ENCODE measurements at regions of chr12 and their contacts with region 1.

Region 1: DNA sequence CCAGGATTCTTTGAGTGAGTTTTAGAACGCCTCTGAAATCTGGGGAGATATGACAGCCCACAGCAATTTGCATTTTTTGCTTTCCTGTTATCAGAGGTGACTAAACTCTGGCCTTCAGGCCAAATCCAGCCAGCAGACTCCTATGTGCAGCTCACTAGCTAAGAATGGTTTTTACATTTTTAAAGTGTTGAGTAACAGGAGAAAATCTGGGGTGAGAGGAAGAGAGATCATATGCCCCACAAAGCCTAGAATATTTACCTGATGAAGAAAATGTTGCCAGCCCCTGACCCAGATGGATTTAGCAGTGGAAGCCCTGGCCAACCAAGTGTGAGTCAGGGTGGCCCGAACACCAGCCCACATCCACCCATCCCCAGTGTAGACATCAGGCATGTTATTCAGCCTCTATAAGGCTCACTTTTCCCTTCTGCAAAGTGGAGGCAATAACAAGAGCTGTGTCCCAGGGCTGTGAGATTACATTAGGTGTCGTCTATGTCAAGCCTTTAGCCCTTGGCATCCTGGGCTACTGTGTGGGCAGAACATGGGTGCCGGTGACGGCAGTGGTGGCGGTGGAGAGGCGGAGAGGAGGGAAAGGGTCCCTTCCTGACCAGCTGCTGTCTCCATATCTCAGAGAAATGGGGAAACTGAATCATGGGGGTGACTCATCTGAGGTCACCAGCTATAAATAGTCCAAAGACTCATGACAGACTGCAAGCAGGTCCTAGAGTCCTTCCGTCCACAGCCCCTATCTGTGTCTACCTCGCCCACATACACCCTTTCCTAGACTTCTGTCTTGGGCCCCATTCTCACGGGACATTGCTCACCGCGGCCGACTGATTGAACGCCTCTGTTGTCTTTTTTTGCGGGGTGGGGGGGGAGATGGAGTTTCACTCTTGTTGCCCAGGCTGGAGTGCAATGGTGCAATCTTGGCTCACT is 32.6 kb upstream of the CD9 start:
- DNase-seq: peak in 6 of 14 experiments; percentile 11 to 79 (median 39)
- ATAC-seq: peak; percentile 45
- H3K4me3 ChIP-seq: no peak overlapping the region
- H3K4me3 Mint-ChIP-seq: peak overlapping the region; percentile 70
- H3K27ac ChIP-seq: peak overlapping the region in 1 of 2 donors; percentile 29
- H3K27ac Mint-ChIP-seq: peak overlapping the region; percentile 45
- H3K4me1 ChIP-seq: peaks cover 31% of the 10 kb centered on the region
- H3K4me1 Mint-ChIP-seq: peaks cover 27% of the 10 kb centered on the region
- H3K27me3 ChIP-seq: no peaks in the 10 kb centered on the region
- H3K27me3 Mint-ChIP-seq: no peaks in the 10 kb centered on the region
- CTCF ChIP-seq: no peak

Region 2: DNA sequence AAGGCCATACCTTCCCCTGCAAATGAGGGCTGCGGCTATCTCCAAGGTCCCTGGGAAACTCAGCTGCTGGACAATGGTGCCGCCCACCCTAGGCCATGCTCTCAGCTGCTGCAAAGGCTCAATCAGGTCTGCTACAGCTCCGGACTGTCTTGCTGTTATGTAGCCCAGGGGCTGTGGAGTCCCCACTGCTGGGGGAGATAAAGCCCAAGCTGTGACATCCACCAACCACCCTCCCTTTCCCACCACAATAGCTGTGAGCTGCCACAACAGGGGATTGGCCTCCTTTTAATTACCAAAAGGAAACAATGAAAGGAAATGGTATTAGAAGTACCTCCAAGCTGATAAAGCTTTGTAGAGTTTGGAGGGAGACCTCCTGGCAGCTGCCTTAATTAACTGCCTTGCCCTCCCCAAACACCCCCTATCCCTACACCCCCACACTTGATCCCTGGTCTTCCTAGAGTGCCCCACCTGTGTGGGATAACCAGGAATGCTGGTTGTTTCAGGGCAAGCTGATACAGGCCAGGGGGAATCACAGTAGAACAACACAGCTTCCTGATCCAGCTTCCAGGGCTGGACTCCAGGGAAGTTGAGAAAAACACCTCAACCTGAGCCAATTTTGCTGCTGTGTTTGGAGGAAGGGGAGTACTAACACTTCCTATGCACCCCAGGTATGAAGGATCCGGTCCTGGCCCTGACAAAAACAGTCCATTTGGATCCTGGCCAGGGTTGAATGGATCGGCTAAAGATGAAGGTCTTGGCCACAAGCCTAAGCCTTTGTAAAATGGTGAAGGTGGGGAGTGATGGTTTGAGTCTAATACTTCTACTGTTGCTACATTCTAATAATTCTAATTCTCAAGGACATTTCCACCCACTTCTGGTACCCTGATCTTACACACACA is 42.9 kb before region 1 on chr12 and contains the start of gene VWF:
- CTCF ChIA-PET with region 1: no interaction called
- POLR2A ChIA-PET with region 1: no interaction called
- intact Hi-C with region 1: loop called in 1 of 2 experiments (anchors 1 kb)
- DNase-seq: no peak
- ATAC-seq: no peak
- H3K4me3 ChIP-seq: no peak within 1 kb of the TSS
- H3K4me3 Mint-ChIP-seq: no peak within 1 kb of the TSS
- H3K27ac ChIP-seq: no peak within 1 kb of the TSS
- H3K27ac Mint-ChIP-seq: no peak within 1 kb of the TSS
- H3K4me1 ChIP-seq: no peaks in the 10 kb centered on the region
- H3K4me1 Mint-ChIP-seq: no peaks in the 10 kb centered on the region
- H3K27me3 ChIP-seq: peaks cover 0 to 3% of the 10 kb centered on the region in 2 experiments
- H3K27me3 Mint-ChIP-seq: no peaks in the 10 kb centered on the region
- CTCF ChIP-seq: no peak
- total RNA-seq, gene VWF: 0.20 TPM in 1 of 2 experiments, not detected in the other

Region 3: GRCh38 chr12:6140651-6141447 is 26.7 kb before region 1 on chr12:
- CTCF ChIA-PET with region 1: no interaction called
- POLR2A ChIA-PET with region 1: interaction called, 8 read pairs
- intact Hi-C with region 1: loop called in 1 of 2 experiments (anchors 1 kb)
- DNase-seq: peak in 10 of 14 experiments; percentile 5 to 69 (median 36)
- ATAC-seq: peak; percentile 70
- H3K4me3 ChIP-seq: no peak overlapping the region
- H3K4me3 Mint-ChIP-seq: peak overlapping the region; percentile 82
- H3K27ac ChIP-seq: peak overlapping the region; percentile 54 to 66
- H3K27ac Mint-ChIP-seq: peak overlapping the region; percentile 94
- H3K4me1 ChIP-seq: peaks cover 55% of the 10 kb centered on the region
- H3K4me1 Mint-ChIP-seq: peaks cover 46% of the 10 kb centered on the region
- H3K27me3 ChIP-seq: no peaks in the 10 kb centered on the region
- H3K27me3 Mint-ChIP-seq: no peaks in the 10 kb centered on the region
- CTCF ChIP-seq: no peak

Measured in CD4-positive, alpha-beta T cell (primary cell).